Activated B cell treated with CpG ODN at 0.5 μM for 24 hours (primary cell): ENCODE measurements at regions of chr9 and their contacts with region 1.

Region 1: DNA sequence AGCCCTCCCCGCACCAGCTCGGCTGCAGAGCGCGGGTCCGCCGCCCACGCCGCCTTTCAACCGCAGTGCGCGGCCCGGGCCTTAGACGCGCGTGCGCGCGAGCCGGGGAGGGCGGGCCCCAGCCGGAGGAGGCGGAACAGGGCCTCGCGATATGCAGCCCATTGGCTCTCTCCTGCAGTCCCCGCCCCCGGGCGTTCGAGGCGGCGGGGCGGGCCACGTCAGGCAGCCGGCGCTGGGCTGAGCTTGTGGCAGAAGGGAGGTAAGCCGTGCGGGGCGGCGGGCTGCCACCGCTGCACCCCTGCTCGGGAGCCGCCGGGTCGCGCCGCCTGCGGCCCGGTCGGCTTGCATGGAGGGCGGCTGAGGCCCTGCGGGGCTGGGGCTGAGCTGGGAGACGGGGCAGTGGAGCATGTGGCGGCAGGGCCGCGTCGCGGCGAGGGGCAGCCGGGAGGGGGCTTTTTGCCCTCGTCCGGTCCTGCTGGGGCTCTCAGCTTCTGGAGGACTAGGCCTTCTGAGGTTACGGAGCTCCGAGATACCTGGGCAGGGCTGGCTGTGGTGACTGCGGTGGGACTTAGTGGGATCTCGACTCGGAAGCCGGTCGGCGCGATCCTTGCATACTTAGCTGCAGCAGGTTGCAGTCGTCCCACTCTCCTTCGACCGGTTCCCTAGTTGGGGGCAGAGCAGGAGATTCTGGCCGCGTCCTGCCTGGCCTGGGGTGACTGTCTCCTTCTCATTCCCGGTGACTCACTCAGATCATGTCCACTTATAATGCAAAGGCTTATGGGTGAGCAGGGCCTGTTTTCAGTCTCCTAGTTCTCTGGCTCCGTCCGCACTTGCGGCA is at the start of gene FOCAD:
- DNase-seq: peak; percentile 95
- ATAC-seq: peak; percentile 99
- H3K4me3 Mint-ChIP-seq: peak within 1 kb of the TSS; percentile 91
- H3K27ac Mint-ChIP-seq: peak within 1 kb of the TSS; percentile 66
- H3K4me1 Mint-ChIP-seq: peaks cover 15% of the 10 kb centered on the region
- H3K27me3 Mint-ChIP-seq: no peaks in the 10 kb centered on the region
- CTCF ChIP-seq: no peak
- total RNA-seq, gene FOCAD: 11.7 and 11.9 TPM in 2 replicates

Region 2: DNA sequence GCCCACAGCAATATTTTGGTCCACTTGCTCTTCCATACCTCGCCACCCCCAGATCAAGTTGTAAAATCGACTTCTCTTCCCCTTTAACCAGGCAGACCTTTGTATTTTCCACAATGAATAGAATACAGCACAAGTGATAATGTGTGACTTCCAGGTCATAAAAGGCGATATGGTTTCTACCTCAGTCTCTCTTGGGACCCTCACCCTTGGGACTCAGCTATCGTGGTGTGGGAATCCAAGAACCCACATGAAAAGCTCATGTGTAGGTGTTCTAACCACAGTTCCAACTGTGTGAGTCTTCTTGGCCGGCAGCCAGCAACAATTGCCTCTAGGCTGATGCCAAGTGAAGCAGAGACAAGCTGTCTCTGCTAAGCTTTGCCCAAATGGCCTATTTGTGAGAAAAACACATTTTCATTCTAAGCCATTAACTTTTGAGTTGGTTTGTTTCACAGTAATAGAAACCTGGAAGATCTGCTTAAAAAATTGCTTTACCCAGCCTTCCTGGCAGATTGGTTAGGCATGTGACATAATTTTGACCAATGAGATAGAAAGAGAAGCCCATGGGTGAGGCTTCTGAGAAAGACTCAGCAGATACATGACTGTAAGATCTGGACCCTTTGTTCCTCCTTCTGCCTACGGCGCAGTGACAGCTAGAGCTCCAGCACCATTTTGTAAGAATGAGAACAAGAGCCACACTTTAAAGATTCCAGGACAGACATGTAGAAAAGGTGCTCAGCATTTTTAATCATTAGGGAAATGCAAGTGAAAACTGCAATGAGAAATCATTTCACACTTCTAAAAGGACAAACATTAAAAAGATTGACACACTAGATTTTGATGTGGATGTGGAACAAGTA is 43.7 kb before region 1 on chr9:
- CTCF ChIA-PET with region 1: no interaction called
- POLR2A ChIA-PET with region 1: no interaction called
- intact Hi-C with region 1: loop called (anchors 1 kb)
- DNase-seq: peak; percentile 34
- ATAC-seq: peak; percentile 93
- H3K4me3 Mint-ChIP-seq: no peak overlapping the region
- H3K27ac Mint-ChIP-seq: no peak overlapping the region
- H3K4me1 Mint-ChIP-seq: peaks cover 9% of the 10 kb centered on the region
- H3K27me3 Mint-ChIP-seq: peaks cover 47% of the 10 kb centered on the region
- CTCF ChIP-seq: no peak

Region 3: GRCh38 chr9:20658677-20659473 is 25.4 kb before region 1 on chr9:
- CTCF ChIA-PET with region 1: no interaction called
- POLR2A ChIA-PET with region 1: no interaction called
- intact Hi-C with region 1: loop called (anchors 1 kb)
- DNase-seq: no peak
- ATAC-seq: no peak
- H3K4me3 Mint-ChIP-seq: peak overlapping the region; percentile 84
- H3K27ac Mint-ChIP-seq: peak overlapping the region; percentile 10
- H3K4me1 Mint-ChIP-seq: no peaks in the 10 kb centered on the region
- H3K27me3 Mint-ChIP-seq: peaks cover 4% of the 10 kb centered on the region
- CTCF ChIP-seq: no peak

Region 4: DNA sequence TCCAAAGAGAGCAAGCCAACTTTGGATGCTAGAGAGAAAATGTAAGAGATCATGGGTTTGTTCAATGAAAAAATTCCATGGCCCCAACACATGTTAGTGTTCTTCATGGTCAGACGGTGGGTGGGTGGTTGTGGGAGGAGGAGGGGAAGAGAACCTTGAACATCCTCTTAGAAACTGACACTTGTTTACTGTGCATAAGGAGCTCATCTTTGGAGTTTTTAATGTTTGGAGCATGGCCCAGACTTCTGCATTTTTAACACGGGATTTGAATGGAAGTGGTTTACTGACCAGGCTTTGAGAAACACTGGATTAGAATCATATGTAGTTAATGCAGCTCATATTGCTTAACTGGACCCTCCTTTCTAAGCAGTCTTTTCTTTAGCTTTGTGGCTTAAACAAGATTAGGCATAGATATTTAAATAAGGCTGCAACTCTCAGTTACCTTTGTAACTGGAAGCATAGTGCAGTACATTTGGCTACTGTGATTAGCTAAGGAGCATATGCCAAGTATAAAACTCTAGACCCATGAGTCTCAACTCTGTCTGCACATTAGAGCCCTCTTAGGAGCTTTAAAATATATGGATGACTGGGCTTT is 59.9 kb after region 1 on chr9:
- CTCF ChIA-PET with region 1: no interaction called
- POLR2A ChIA-PET with region 1: no interaction called
- intact Hi-C with region 1: no loop called
- DNase-seq: no peak
- ATAC-seq: no peak
- H3K4me3 Mint-ChIP-seq: no peak overlapping the region
- H3K27ac Mint-ChIP-seq: no peak overlapping the region
- H3K4me1 Mint-ChIP-seq: no peaks in the 10 kb centered on the region
- H3K27me3 Mint-ChIP-seq: no peaks in the 10 kb centered on the region
- CTCF ChIP-seq: no peak

Region 5: GRCh38 chr9:21031091-21031807 is 347.0 kb after region 1 on chr9 and contains the start of gene HACD4:
- CTCF ChIA-PET with region 1: no interaction called
- POLR2A ChIA-PET with region 1: no interaction called
- intact Hi-C with region 1: loop called (anchors 1 kb)
- DNase-seq: peak; percentile 59
- ATAC-seq: peak; percentile 78
- H3K4me3 Mint-ChIP-seq: peak within 1 kb of the TSS; percentile 81
- H3K27ac Mint-ChIP-seq: peak within 1 kb of the TSS; percentile 70
- H3K4me1 Mint-ChIP-seq: peaks cover 17% of the 10 kb centered on the region
- H3K27me3 Mint-ChIP-seq: no peaks in the 10 kb centered on the region
- CTCF ChIP-seq: no peak
- total RNA-seq, gene HACD4: 3.3 and 4.1 TPM in 2 replicates

Region 6: DNA sequence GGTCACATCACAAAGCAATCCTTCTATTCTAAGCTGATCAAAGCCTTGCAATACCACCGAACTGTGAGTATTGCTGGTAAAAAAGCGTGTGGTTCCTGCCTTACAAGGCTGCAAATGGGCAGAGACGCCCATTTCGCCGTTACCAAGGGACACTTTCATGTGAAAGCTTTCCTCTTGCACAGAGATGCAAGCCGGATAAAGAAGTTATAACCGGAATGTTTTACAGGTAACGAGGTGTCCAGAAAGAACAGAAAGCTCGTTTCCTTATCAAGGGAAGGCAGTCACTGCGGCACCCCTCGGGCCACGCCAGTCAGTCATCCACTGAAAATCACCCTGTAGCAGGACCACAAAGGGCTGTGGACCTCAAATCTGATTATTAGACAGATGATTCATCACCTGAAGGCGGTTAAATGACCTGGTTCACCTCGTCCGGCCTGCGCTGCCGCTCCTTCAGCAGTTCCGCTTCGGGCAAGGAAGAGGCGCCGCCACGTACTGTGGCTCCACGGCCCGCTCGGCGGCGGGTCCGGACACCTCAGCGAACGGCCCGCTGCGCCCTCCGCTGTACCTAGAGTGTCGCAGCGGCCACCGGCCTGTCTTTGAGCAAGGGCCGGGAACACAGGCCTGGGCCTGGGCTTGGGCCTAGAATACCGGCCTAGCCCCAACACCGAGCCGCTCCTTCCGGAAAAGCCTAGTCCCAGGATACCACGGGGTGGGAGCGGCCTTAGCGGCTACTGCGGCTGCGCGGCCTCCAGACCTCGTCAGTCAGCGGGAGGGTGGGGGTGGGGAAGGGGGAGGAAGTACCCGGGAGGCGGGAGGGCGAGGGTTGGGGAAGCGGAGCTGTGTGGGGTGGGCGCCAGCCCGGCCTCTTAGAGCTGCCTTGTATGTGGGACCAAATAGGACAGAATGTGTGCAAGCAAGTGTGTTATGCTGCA is 650.7 kb after region 1 on chr9 and contains the start of gene KLHL9:
- CTCF ChIA-PET with region 1: no interaction called
- POLR2A ChIA-PET with region 1: no interaction called
- intact Hi-C with region 1: loop called (anchors 10 kb)
- DNase-seq: peak; percentile 76
- ATAC-seq: peak; percentile 88
- H3K4me3 Mint-ChIP-seq: peak within 1 kb of the TSS; percentile 91
- H3K27ac Mint-ChIP-seq: peak within 1 kb of the TSS; percentile 87
- H3K4me1 Mint-ChIP-seq: peaks cover 50% of the 10 kb centered on the region
- H3K27me3 Mint-ChIP-seq: peaks cover 7% of the 10 kb centered on the region
- CTCF ChIP-seq: no peak
- total RNA-seq, gene KLHL9: 13.1 and 13.8 TPM in 2 replicates

Region 7: GRCh38 chr9:21802195-21803000 is 1118.1 kb after region 1 on chr9 and contains the start of gene MTAP:
- CTCF ChIA-PET with region 1: no interaction called
- POLR2A ChIA-PET with region 1: no interaction called
- intact Hi-C with region 1: loop called (anchors 1 kb)
- DNase-seq: peak; percentile 68
- ATAC-seq: peak; percentile 88
- H3K4me3 Mint-ChIP-seq: peak within 1 kb of the TSS; percentile 99
- H3K27ac Mint-ChIP-seq: peak within 1 kb of the TSS; percentile 91
- H3K4me1 Mint-ChIP-seq: peaks cover 53% of the 10 kb centered on the region
- H3K27me3 Mint-ChIP-seq: peaks cover 15% of the 10 kb centered on the region
- CTCF ChIP-seq: no peak
- total RNA-seq, gene MTAP: 30.4 and 43.2 TPM in 2 replicates